ENCODE measurements at regions of chr7 and their contacts with region 1.

Region 1: GRCh38 chr7:42940985-42941847 is 9.0 kb downstream of the MRPL32 start:
- DNase-seq: peak; percentile 78
- H3K4me3 ChIP-seq: no peak overlapping the region
- H3K27ac ChIP-seq: no peak overlapping the region
- H3K4me1 ChIP-seq: 0 out of 2 replicates have a peak, but pooled peaks cover 5% of the 10 kb centered on the region
- H3K27me3 ChIP-seq: no peaks in the 10 kb centered on the region

Region 2: DNA sequence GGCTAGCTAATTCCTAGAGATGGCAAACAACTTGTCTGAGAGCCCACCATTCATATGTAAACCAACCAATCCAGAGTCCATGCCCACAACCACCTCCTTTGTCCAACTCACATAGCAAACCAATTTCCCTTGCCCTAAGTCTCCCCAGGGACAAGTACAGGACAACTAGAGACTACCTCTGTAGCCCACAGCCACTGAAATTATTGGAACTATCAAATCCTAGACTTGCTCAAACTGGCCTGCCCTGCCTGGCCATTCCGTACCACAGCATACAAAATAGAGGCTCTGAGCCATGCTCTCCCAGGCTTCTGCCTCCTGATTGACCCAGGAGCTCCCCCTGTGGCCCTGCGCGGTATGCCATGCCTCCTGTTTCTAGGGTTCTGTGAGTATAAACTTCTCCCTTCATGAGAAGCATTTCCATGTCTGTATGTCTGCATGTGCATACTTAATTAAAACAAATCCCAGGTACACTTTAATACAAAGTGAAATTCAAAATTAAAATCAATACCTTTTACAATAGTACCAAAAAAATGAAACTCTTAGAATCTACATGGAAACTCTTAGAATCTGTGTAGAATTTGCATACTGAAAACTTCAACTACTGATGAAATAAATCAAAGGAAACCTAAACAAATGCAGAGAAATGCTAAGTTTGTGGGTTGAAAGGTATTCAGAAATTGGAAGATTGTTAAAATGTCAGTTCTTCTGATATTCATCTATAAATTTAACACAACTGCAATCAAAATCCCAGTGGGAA is 167.2 kb after region 1 on chr7:
- in situ Hi-C with region 1: loop called (anchors 10 kb)
- DNase-seq: peak; percentile 77
- H3K4me3 ChIP-seq: no peak overlapping the region
- H3K27ac ChIP-seq: no peak overlapping the region
- H3K4me1 ChIP-seq: no peaks in the 10 kb centered on the region
- H3K27me3 ChIP-seq: peaks cover 24% of the 10 kb centered on the region

Region 3: GRCh38 chr7:43249823-43250145 is 308.6 kb after region 1 on chr7:
- in situ Hi-C with region 1: loop called (anchors 10 kb)
- DNase-seq: peak; percentile 46
- H3K4me3 ChIP-seq: peak overlapping the region; percentile 74
- H3K27ac ChIP-seq: peak overlapping the region; percentile 76
- H3K4me1 ChIP-seq: peaks cover 12% of the 10 kb centered on the region
- H3K27me3 ChIP-seq: no peaks in the 10 kb centered on the region